Activated naive CD8-positive, alpha-beta T cell treated with anti-CD3 and anti-CD28 coated beads, Interleukin-2, amount 10 ng/mL, durations not matched to agents 7 days and 5 days (primary cell): ENCODE measurements at regions of chr14 and their contacts with region 1.

Region 1: DNA sequence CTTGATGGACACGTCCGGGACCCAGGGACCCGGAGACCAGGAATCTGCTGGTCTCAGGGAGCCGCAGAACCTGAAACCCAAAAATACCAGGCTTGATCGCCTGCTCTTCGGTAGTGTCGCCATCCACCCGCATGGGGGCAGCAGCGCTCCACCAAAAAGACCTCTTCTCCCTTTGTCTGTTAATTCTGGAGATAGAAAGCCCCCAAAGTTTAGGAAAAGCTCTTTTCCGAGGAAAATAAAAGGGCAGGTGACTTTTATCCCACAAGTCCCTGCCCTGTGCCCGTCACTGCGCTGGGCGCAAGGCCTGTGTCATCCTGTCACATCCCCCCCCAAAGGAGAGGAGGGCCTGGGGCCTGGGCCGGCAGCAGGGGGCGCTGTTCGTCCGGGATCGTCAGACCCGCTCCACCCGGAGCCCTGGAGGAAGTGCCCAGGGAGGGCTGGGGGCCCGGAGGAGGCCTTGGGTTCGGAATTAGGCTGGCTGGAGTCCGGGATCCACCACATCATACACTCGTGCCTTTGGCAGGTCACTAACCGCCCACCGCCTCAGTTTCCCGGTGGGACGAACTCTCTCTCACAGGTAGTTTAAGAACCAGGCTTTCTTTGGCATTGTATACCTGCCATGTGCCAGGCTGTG is 31.9 kb downstream of the DAD1 start:
- DNase-seq: peak; percentile 97
- ATAC-seq: peak; percentile 19
- H3K4me3 Mint-ChIP-seq: peak overlapping the region; percentile 65
- H3K27ac Mint-ChIP-seq: peak overlapping the region; percentile 93
- H3K4me1 Mint-ChIP-seq: peaks cover 84% of the 10 kb centered on the region
- H3K27me3 Mint-ChIP-seq: no peaks in the 10 kb centered on the region

Region 2: GRCh38 chr14:21723431-21724045 is 833.6 kb before region 1 on chr14:
- POLR2A ChIA-PET with region 1: interaction called, 15 read pairs
- DNase-seq: peak; percentile 49
- ATAC-seq: peak; percentile 83
- H3K4me3 Mint-ChIP-seq: peak overlapping the region; percentile 70
- H3K27ac Mint-ChIP-seq: peak overlapping the region; percentile 80
- H3K4me1 Mint-ChIP-seq: peaks cover 6% of the 10 kb centered on the region
- H3K27me3 Mint-ChIP-seq: peaks cover 37% of the 10 kb centered on the region

Region 3: GRCh38 chr14:21978184-21978998 is 578.7 kb before region 1 on chr14:
- POLR2A ChIA-PET with region 1: interaction called, 15 read pairs
- DNase-seq: peak; percentile 62
- ATAC-seq: peak; percentile 76
- H3K4me3 Mint-ChIP-seq: peak overlapping the region; percentile 65
- H3K27ac Mint-ChIP-seq: peak overlapping the region; percentile 78
- H3K4me1 Mint-ChIP-seq: peaks cover 8% of the 10 kb centered on the region
- H3K27me3 Mint-ChIP-seq: peaks cover 6% of the 10 kb centered on the region

Region 4: GRCh38 chr14:22122829-22123560 is 434.1 kb before region 1 on chr14:
- POLR2A ChIA-PET with region 1: interaction called, 13 read pairs
- DNase-seq: no peak
- ATAC-seq: peak; percentile 52
- H3K4me3 Mint-ChIP-seq: peak overlapping the region; percentile 85
- H3K27ac Mint-ChIP-seq: peak overlapping the region; percentile 90
- H3K4me1 Mint-ChIP-seq: peaks cover 9% of the 10 kb centered on the region
- H3K27me3 Mint-ChIP-seq: no peaks in the 10 kb centered on the region

Region 5: GRCh38 chr14:22536853-22537338 is 20.2 kb before region 1 on chr14:
- POLR2A ChIA-PET with region 1: interaction called, 452 read pairs
- DNase-seq: no peak
- ATAC-seq: peak; percentile 83
- H3K4me3 Mint-ChIP-seq: peak overlapping the region; percentile 86
- H3K27ac Mint-ChIP-seq: peak overlapping the region; percentile 99
- H3K4me1 Mint-ChIP-seq: peaks cover 91% of the 10 kb centered on the region
- H3K27me3 Mint-ChIP-seq: no peaks in the 10 kb centered on the region

Region 6: GRCh38 chr14:22598099-22598899 is 41.2 kb after region 1 on chr14 and contains the start of gene ABHD4:
- POLR2A ChIA-PET with region 1: interaction called, 10 read pairs
- DNase-seq: peak; percentile 87
- ATAC-seq: peak; percentile 89
- H3K4me3 Mint-ChIP-seq: peak within 1 kb of the TSS; percentile 91
- H3K27ac Mint-ChIP-seq: peak within 1 kb of the TSS; percentile 81
- H3K4me1 Mint-ChIP-seq: peaks cover 30% of the 10 kb centered on the region
- H3K27me3 Mint-ChIP-seq: no peaks in the 10 kb centered on the region
- total RNA-seq, gene ABHD4: 13.0 to 17.9 TPM